IMR-90 (cell line): ENCODE measurements at regions of chr17 and their contacts with region 1.

Region 1: DNA sequence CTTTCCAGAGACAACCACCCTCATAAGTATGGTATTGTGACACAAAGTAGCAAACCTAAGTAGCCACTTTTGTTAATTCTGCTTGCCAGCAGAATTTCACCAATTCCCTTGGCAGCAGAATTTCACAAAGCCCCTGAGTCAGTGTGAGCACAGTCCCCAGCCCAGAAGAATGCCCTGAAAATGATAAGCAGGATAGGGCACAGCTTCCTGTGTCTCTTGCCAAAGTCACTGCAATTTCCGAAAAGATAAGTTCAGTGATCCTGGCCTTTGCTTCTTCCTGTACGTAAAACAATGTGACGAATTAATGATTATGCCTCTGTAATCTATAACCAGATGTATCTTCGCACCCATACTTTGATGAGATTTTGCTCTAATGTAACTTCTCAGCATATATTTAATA is 16.0 kb upstream of the WIPF2 start:
- DNase-seq: no peak
- ATAC-seq: no peak
- H3K4me3 ChIP-seq: no peak overlapping the region
- H3K27ac ChIP-seq: no peak overlapping the region
- H3K4me1 ChIP-seq: peaks cover 3% of the 10 kb centered on the region
- H3K27me3 ChIP-seq: no peaks in the 10 kb centered on the region
- CTCF ChIP-seq: no peak
- POLR2A ChIP-seq: no peak
- RAD21 ChIP-seq: no peak

Region 2: GRCh38 chr17:39553341-39553945 is 649.7 kb before region 1 on chr17:
- CTCF ChIA-PET with region 1: no interaction called
- POLR2A ChIA-PET with region 1: no interaction called
- dilution Hi-C with region 1: no loop called
- in situ Hi-C with region 1: no loop called
- intact Hi-C with region 1: no loop called
- DNase-seq: peak; percentile 60
- ATAC-seq: peak; percentile 91
- H3K4me3 ChIP-seq: no peak overlapping the region
- H3K27ac ChIP-seq: no peak overlapping the region
- H3K4me1 ChIP-seq: peaks cover 4% of the 10 kb centered on the region; the same call in 1 of the 2 replicates
- H3K27me3 ChIP-seq: no peaks in the 10 kb centered on the region
- CTCF ChIP-seq: no peak
- POLR2A ChIP-seq: no peak
- RAD21 ChIP-seq: no peak

Region 3: GRCh38 chr17:40251576-40251975 is 48.4 kb after region 1 on chr17:
- CTCF ChIA-PET with region 1: no interaction called
- POLR2A ChIA-PET with region 1: no interaction called
- dilution Hi-C with region 1: no loop called
- in situ Hi-C with region 1: loop called (anchors 5 kb)
- intact Hi-C with region 1: loop called (anchors 10 kb)
- DNase-seq: peak; percentile 85
- ATAC-seq: peak; percentile 86
- H3K4me3 ChIP-seq: no peak overlapping the region
- H3K27ac ChIP-seq: no peak overlapping the region
- H3K4me1 ChIP-seq: 0 out of 2 replicates have a peak, but pooled peaks cover 3% of the 10 kb centered on the region
- H3K27me3 ChIP-seq: no peaks in the 10 kb centered on the region
- CTCF ChIP-seq: no peak
- POLR2A ChIP-seq: no peak
- RAD21 ChIP-seq: no peak

Region 4: GRCh38 chr17:40314584-40314955 is 111.4 kb after region 1 on chr17:
- CTCF ChIA-PET with region 1: no interaction called
- POLR2A ChIA-PET with region 1: no interaction called
- dilution Hi-C with region 1: no loop called
- in situ Hi-C with region 1: no loop called
- intact Hi-C with region 1: no loop called
- DNase-seq: peak; percentile 91
- ATAC-seq: no peak
- H3K4me3 ChIP-seq: no peak overlapping the region
- H3K27ac ChIP-seq: no peak overlapping the region; the same call in 1 of the 2 replicates
- H3K4me1 ChIP-seq: peaks cover 59% of the 10 kb centered on the region
- H3K27me3 ChIP-seq: no peaks in the 10 kb centered on the region
- CTCF ChIP-seq: no peak
- POLR2A ChIP-seq: no peak
- RAD21 ChIP-seq: no peak

Region 5: DNA sequence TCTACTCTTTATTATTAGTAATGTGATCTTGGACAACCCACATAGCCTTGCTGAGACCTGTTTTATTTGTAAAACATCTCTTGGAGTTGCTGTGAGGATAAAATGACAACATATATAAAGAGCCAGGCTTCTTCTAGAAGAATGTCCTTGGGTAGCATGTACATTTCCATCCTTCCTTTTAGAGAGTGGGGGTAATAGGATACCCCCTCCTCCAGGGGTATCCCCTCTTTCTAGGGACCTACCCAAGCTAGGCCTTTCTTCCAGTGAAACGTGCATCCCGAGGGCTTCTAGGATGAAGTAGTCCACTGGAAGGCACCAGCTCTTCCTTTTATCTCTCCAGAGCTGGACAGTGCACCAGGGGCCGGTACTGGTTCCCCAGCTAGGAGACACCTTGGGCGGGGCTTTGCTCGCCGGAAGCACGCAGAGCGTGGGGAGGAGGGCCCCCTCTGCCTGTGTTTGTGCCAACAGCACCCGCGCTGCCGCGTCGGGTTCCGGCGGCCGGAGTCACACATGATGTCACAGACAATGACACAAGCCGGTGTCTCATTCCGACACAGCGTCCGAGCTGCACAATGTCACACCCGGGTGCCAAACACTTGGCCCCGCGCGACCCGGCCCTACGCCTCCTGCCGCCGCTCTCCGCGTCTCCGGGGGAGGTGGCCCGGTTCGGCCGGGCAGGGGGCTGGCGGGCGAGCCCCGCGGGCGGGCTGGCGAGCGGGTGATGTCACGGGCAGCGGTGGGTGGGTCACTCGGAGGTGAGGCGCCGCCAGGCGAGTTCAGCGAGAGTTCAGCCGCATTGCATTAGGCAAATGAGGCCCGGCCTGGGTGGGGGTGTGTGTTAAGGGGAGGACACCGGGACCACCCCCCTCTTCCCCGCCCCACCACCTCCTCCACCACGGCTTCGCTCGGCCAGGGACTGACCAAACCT is 138.0 kb after region 1 on chr17:
- CTCF ChIA-PET with region 1: no interaction called
- POLR2A ChIA-PET with region 1: no interaction called
- dilution Hi-C with region 1: no loop called
- in situ Hi-C with region 1: no loop called
- intact Hi-C with region 1: loop called (anchors 5 kb)
- DNase-seq: peak; percentile 73
- ATAC-seq: peak; percentile 45
- H3K4me3 ChIP-seq: peak overlapping the region; percentile 82
- H3K27ac ChIP-seq: peak overlapping the region; percentile 73
- H3K4me1 ChIP-seq: peaks cover 26% of the 10 kb centered on the region
- H3K27me3 ChIP-seq: no peaks in the 10 kb centered on the region
- CTCF ChIP-seq: no peak
- POLR2A ChIP-seq: peak; percentile 79; the same call in 1 of the 2 replicates
- RAD21 ChIP-seq: peak; percentile 27